RWPE1 (cell line): ENCODE measurements at regions of chr14 and their contacts with region 1.

Region 1: DNA sequence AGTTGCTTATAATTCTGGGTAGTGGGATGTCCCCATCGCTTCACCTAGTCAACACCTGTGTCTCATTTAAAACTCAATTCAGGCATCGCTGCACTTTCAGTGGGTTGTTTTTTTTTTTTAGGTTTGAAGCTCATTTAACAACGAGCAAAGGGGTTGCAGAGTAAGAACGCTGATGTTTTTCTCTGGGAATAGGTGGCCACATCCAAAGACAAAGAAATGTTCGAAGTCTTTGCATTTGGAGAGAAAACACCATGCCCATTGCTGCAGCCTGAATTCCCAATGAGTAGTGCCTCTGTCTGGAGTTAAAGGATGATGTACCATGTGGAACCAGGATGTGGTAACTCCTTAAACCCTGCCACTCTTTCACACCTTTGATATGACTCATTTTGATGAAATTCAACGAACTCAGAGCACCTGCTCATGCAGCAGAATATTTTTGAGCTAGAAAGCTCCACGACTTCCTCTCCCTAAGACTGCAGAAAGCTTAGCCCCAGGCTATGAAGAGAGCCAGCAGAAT is 35.1 kb upstream of the BATF start:
- DNase-seq: peak; percentile 74
- H3K27ac ChIP-seq: no peak overlapping the region
- CTCF ChIP-seq: no peak

Region 2: DNA sequence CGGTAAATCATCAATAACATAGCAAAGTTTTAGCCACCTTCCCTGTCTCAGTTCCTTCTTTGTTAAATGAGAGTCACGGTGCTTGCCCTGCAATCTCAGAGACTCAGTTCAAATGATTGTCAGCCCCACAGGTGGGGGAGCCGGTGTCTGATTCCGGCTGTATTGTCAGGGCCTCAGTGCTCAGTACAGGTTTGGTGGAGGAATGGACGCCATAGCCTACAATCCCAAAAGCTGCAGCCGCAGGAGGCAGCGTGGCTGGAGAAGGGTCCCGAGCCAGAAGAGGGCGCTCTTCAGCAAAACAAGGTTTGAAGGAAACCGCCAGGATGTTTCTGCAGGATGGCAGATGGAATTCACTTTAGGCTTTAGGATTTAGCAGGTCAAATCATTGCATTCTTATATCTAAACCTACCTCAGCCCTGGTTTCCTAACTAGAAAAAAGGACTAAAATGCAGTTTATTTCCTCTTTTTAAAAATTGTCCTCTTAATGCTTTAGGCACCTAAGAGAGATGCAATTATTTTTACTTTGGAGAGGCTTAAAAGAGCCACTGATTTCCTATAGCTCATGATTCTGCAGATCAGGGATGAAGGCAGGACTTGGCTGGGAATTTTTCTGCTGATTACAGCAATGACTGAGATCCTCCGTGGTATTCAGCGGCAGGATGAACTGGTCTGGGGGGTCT is 179.4 kb before region 1 on chr14:
- CTCF ChIA-PET with region 1: interaction called, 34 read pairs
- POLR2A ChIA-PET with region 1: no interaction called
- DNase-seq: peak; percentile 73
- H3K27ac ChIP-seq: no peak overlapping the region
- CTCF ChIP-seq: peak; percentile 89

Region 3: DNA sequence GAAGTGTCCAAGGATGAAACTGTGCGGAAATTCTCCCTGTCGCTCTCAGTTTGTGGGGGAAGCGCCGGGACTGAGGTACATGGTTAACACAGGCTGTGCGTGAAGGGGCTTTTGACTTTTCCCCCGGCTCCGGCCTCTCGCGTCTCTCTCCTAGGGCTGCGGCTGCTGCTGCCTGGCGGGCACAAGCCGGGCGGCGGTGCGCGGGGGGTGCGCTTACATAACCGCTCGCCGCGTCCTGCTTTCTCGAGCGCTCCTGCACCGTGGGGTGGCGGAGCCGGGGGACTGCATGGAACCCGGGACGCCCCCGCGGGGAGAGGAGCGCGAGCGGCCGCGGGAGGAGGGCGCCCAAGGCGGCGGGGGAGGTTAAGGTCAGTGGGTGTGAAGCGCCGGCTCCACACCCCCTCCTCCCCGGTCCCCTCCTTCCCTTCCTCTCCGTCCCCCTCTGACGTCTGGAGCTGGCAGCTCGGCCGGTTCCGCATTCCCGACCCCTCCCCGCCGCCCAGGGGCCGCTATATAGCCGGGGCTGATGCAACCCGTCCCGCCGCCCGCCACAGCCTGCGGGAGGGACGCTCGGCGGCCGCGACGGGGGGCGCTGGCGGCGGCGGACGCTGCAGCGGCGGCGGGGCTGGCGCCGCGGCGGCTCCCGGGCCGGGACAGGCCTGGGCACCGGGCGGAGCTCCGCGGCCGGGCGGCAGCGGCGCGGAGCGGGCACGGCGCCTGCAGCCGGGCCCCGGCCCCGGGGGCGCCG is 59.6 kb before region 1 on chr14 and contains the start of gene JDP2:
- CTCF ChIA-PET with region 1: interaction called, 10 read pairs
- POLR2A ChIA-PET with region 1: no interaction called
- DNase-seq: peak; percentile 76
- H3K27ac ChIP-seq: peak within 1 kb of the TSS; percentile 74
- CTCF ChIP-seq: no peak

Region 4: DNA sequence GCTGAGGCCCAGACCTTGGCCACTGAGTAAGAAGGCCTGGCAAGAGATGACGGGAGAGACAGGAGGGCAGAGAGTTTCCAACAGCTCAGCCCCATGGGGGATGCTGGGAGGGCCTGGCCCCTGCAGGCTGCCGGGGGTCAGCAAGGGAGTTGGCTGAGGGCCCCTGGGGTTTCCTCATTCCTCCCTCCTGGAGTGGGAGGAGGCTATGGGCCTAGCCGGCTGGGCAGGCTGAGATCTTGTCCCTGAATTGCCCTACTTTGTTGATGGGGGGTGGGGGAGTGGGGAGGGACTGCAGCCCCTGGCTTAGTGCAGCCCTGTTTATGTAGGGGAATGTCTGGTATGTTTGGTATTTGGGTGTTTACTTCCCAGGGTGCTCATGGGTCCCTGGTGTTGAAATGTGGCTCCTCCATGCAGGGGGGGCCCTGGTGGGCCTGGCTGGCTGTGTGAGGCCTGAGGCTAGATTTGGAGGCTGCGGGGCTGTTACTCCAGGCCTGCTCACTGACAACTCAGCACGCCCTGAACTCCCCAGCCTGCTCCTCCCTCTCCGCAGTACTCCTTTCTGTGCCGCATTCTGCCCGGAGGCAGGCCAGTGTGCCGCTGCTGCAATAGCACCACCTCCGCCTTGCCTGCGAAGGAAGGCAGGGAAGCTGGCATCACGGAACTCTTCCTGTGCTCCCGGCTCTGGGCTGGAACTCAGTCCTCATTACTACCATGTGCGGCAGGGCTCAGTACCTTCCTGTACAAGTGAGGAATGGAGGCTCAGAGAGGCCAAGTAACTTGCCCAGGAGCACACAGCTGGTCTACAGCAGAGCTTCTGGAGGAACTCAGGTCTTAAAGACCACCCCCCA is 34.1 kb before region 1 on chr14:
- CTCF ChIA-PET with region 1: interaction called, 14 read pairs
- POLR2A ChIA-PET with region 1: no interaction called
- DNase-seq: peak; percentile 90
- H3K27ac ChIP-seq: peak overlapping the region; percentile 94
- CTCF ChIP-seq: no peak